Caco-2 (cell line): ENCODE measurements at regions of chr10 and their contacts with region 1.

Region 1: DNA sequence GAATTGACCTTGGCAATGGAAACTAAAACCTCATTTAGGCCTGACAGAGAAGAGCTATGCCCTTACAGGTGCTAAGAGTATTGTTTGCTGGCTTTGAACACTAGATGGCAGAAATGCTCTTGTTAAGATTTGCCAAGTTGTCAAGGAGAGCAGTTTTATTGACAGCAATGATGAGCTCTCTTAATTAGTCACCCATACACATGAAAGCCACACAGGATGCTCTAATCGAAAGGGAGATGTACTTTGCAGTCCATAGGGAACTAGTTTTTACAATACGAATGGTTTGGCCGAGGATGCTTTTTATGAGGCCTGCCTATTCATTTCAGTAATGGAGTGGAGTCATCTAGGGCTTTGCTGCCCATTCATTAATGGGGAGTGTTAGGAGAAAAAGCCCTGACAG is 45.4 kb upstream of the MBL2 start:
- DNase-seq: peak in 1 of 2 experiments; percentile 76
- H3K4me3 ChIP-seq: no peak overlapping the region
- H3K4me3 Mint-ChIP-seq: no peak overlapping the region
- H3K27ac Mint-ChIP-seq: no peak overlapping the region
- H3K4me1 ChIP-seq: no peaks in the 10 kb centered on the region; the same call in 1 of the 2 replicates
- H3K4me1 Mint-ChIP-seq: no peaks in the 10 kb centered on the region
- H3K27me3 ChIP-seq: no peaks in the 10 kb centered on the region; the same call in 1 of the 2 replicates
- H3K27me3 Mint-ChIP-seq: peaks cover 3% of the 10 kb centered on the region
- CTCF ChIP-seq: peak; percentile 89 to 90

Region 2: DNA sequence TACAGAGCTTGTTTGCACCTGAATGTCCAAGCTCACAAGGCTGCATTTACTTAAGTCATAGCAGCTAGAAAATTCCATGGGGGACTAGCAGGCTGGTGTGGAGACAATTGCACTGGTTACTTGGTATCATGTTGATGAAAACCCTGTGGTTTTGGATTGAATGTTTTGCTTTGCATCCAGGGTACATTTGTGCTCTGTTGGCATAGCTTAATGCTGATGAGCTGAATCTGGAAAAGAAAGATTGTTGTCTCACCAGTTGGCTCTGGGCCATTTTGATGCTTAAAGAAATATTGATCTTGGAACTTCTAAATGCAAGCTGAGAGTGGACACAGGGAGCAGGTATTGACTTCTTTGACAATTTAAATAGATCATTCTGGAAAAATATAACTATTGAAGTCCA is 77.0 kb after region 1 on chr10:
- CTCF ChIA-PET with region 1: no interaction called
- POLR2A ChIA-PET with region 1: no interaction called
- intact Hi-C with region 1: no loop called
- DNase-seq: no peak
- H3K4me3 ChIP-seq: no peak overlapping the region
- H3K4me3 Mint-ChIP-seq: no peak overlapping the region
- H3K27ac Mint-ChIP-seq: no peak overlapping the region
- H3K4me1 ChIP-seq: peaks cover 18% of the 10 kb centered on the region
- H3K4me1 Mint-ChIP-seq: peaks cover 22% of the 10 kb centered on the region
- H3K27me3 ChIP-seq: no peaks in the 10 kb centered on the region
- H3K27me3 Mint-ChIP-seq: no peaks in the 10 kb centered on the region
- CTCF ChIP-seq: no peak

Region 3: GRCh38 chr10:53052521-53053164 is 234.6 kb after region 1 on chr10:
- CTCF ChIA-PET with region 1: no interaction called
- POLR2A ChIA-PET with region 1: no interaction called
- intact Hi-C with region 1: loop called (anchors 10 kb)
- DNase-seq: no peak
- H3K4me3 ChIP-seq: no peak overlapping the region
- H3K4me3 Mint-ChIP-seq: no peak overlapping the region
- H3K27ac Mint-ChIP-seq: no peak overlapping the region
- H3K4me1 ChIP-seq: no peaks in the 10 kb centered on the region
- H3K4me1 Mint-ChIP-seq: peaks cover 6% of the 10 kb centered on the region
- H3K27me3 ChIP-seq: no peaks in the 10 kb centered on the region
- H3K27me3 Mint-ChIP-seq: no peaks in the 10 kb centered on the region
- CTCF ChIP-seq: no peak

Region 4: GRCh38 chr10:53434413-53434812 is 616.4 kb after region 1 on chr10:
- CTCF ChIA-PET with region 1: no interaction called
- POLR2A ChIA-PET with region 1: no interaction called
- intact Hi-C with region 1: loop called (anchors 10 kb)
- DNase-seq: no peak
- H3K4me3 ChIP-seq: no peak overlapping the region
- H3K4me3 Mint-ChIP-seq: no peak overlapping the region
- H3K27ac Mint-ChIP-seq: no peak overlapping the region
- H3K4me1 ChIP-seq: no peaks in the 10 kb centered on the region
- H3K4me1 Mint-ChIP-seq: peaks cover 9% of the 10 kb centered on the region
- H3K27me3 ChIP-seq: no peaks in the 10 kb centered on the region
- H3K27me3 Mint-ChIP-seq: peaks cover 12% of the 10 kb centered on the region
- CTCF ChIP-seq: no peak

Region 5: DNA sequence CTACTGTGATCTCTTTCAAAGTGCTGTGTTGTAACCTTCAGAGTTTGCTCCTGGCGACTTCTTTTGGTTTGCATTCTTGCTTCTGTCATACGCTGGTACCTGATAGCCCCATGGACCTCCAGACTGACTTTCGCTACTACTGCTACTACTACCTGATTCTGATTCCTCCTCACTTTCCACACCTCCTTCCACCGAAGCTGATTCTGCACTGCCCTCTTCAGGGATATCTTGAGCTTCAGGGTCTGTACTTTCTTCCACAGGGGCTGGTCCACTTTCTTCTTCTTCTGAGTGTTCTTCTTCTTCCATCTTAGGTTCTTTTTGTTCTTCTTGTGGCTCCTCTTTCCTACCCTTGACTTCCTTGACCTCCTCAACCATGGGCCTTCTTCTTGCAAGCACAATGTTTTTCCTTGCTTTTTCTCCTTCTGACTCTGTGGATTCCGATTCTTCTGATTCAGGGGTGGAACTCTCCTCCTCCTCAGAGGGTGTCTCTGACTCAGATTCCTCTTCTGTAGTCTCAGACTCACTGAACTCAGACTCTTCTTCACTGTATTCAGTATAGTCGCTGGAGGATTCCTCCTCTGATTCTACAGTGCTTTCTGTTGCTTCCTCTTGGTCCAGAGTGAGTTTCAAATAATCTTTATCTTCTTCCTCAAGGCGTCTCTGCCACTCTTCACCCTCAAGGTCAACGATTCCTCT is 990.8 kb after region 1 on chr10:
- CTCF ChIA-PET with region 1: interaction called, 7 read pairs
- POLR2A ChIA-PET with region 1: no interaction called
- intact Hi-C with region 1: loop called (anchors 10 kb)
- DNase-seq: peak; percentile 47 to 59
- H3K4me3 ChIP-seq: no peak overlapping the region
- H3K4me3 Mint-ChIP-seq: no peak overlapping the region
- H3K27ac Mint-ChIP-seq: no peak overlapping the region
- H3K4me1 ChIP-seq: no peaks in the 10 kb centered on the region
- H3K4me1 Mint-ChIP-seq: peaks cover 7% of the 10 kb centered on the region
- H3K27me3 ChIP-seq: no peaks in the 10 kb centered on the region; the same call in 1 of the 2 replicates
- H3K27me3 Mint-ChIP-seq: peaks cover 7% of the 10 kb centered on the region
- CTCF ChIP-seq: peak in 1 of 2 experiments; percentile 58

Region 6: GRCh38 chr10:53846809-53847208 is 1028.8 kb after region 1 on chr10:
- CTCF ChIA-PET with region 1: no interaction called
- POLR2A ChIA-PET with region 1: no interaction called
- intact Hi-C with region 1: loop called (anchors 2 kb)
- DNase-seq: no peak
- H3K4me3 ChIP-seq: no peak overlapping the region
- H3K4me3 Mint-ChIP-seq: no peak overlapping the region
- H3K27ac Mint-ChIP-seq: no peak overlapping the region
- H3K4me1 ChIP-seq: no peaks in the 10 kb centered on the region
- H3K4me1 Mint-ChIP-seq: no peaks in the 10 kb centered on the region
- H3K27me3 ChIP-seq: no peaks in the 10 kb centered on the region
- H3K27me3 Mint-ChIP-seq: no peaks in the 10 kb centered on the region
- CTCF ChIP-seq: peak; percentile 35 to 55

Region 7: GRCh38 chr10:54402576-54402975 is 1584.6 kb after region 1 on chr10:
- CTCF ChIA-PET with region 1: no interaction called
- POLR2A ChIA-PET with region 1: no interaction called
- intact Hi-C with region 1: loop called (anchors 1 kb)
- DNase-seq: peak in 1 of 2 experiments; percentile 59
- H3K4me3 ChIP-seq: no peak overlapping the region
- H3K4me3 Mint-ChIP-seq: no peak overlapping the region
- H3K27ac Mint-ChIP-seq: no peak overlapping the region
- H3K4me1 ChIP-seq: no peaks in the 10 kb centered on the region
- H3K4me1 Mint-ChIP-seq: no peaks in the 10 kb centered on the region
- H3K27me3 ChIP-seq: no peaks in the 10 kb centered on the region
- H3K27me3 Mint-ChIP-seq: peaks cover 4% of the 10 kb centered on the region
- CTCF ChIP-seq: peak; percentile 80 to 89